ENCODE measurements at regions of chr9 and their contacts with region 1.

Region 1: GRCh38 chr9:132026932-132027585 is 52.6 kb downstream of the MED27 start:
- DNase-seq: peak; percentile 91
- H3K4me3 ChIP-seq: peak overlapping the region in 1 of 3 experiments; percentile 6
- H3K27ac ChIP-seq: peak overlapping the region; percentile 61
- H3K4me1 ChIP-seq: peaks cover 49% of the 10 kb centered on the region
- H3K27me3 ChIP-seq: no peaks in the 10 kb centered on the region
- CTCF ChIP-seq: no peak

Region 2: DNA sequence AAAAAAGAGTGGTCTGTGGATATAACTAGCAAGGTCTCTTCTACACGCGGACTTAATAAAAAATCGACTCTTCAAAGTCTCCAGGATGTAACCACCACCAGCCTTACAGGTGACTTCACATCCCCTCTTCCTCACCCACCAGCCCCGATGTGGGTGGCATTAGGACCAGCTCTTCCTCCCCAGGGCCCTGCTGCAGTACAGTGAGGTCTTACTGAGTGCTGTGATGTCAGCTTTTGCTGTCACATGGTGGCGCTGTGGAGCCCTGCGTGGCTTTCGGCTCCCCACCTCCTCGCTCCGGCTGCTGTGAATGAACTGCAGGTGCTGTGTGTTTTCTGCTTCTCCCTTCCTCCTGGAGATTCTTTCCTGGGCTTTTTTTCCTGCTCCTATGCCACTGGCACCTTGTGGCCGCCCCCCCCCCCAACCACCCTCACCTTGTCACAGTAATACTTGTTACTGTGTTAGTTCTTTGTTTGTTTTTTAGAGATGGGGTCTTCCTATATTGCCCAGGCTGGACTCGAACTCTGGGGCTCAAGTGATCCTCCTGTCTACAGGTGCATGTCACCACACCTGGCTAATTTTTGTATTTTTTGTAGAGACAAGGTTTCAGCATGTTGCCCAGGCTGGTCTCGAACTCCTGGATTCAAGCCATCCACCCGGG is 271.4 kb before region 1 on chr9:
- CTCF ChIA-PET with region 1: interaction called, 14 read pairs
- dilution Hi-C with region 1: no loop called
- in situ Hi-C with region 1: no loop called
- intact Hi-C with region 1: no loop called
- DNase-seq: peak; percentile 65
- H3K4me3 ChIP-seq: no peak overlapping the region
- H3K27ac ChIP-seq: no peak overlapping the region
- H3K4me1 ChIP-seq: no peaks in the 10 kb centered on the region
- H3K27me3 ChIP-seq: no peaks in the 10 kb centered on the region
- CTCF ChIP-seq: peak; percentile 91 to 95

Region 3: GRCh38 chr9:131910572-131910971 is 116.5 kb before region 1 on chr9:
- CTCF ChIA-PET with region 1: no interaction called
- dilution Hi-C with region 1: no loop called
- in situ Hi-C with region 1: no loop called
- intact Hi-C with region 1: no loop called
- DNase-seq: no peak
- H3K4me3 ChIP-seq: no peak overlapping the region
- H3K27ac ChIP-seq: no peak overlapping the region
- H3K4me1 ChIP-seq: no peaks in the 10 kb centered on the region
- H3K27me3 ChIP-seq: no peaks in the 10 kb centered on the region
- CTCF ChIP-seq: no peak

Region 4: DNA sequence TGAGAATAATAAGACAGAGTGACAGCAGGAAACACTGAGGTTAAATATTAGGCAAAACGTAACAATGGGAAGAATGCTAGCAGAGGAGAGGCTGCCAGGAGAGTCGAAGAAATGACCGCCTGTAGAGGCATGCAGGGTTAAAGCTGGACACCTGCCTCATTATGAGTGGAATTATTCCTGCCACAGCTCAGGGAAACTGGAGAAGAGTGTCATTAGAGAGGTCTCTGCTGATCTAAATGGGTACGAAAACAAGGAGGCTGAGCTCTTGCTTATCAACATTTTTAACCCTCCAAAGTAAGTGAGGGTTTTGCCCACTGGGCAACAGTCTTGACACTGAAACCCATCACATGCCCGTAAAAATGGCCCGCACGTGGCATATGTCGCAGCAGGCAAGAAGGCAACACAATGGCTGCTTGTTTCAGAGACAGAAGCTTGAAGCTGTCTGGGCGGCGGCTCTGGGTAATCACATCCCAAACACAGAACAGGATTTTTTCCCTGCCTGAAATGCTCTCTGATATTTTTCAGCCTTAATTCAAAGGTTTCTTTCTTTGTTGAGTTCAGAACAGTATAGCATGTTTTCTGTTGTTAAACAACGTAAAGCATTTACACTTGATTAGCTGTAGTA is 66.1 kb before region 1 on chr9:
- CTCF ChIA-PET with region 1: no interaction called
- dilution Hi-C with region 1: no loop called
- in situ Hi-C with region 1: no loop called
- intact Hi-C with region 1: no loop called
- DNase-seq: peak; percentile 31
- H3K4me3 ChIP-seq: no peak overlapping the region
- H3K27ac ChIP-seq: no peak overlapping the region
- H3K4me1 ChIP-seq: peaks cover 18% of the 10 kb centered on the region
- H3K27me3 ChIP-seq: no peaks in the 10 kb centered on the region
- CTCF ChIP-seq: no peak

Region 5: GRCh38 chr9:131999692-132000551 is 27.1 kb before region 1 on chr9:
- CTCF ChIA-PET with region 1: no interaction called
- dilution Hi-C with region 1: no loop called
- in situ Hi-C with region 1: no loop called
- intact Hi-C with region 1: loop called (anchors 2 kb)
- DNase-seq: peak; percentile 88
- H3K4me3 ChIP-seq: no peak overlapping the region
- H3K27ac ChIP-seq: peak overlapping the region; percentile 83
- H3K4me1 ChIP-seq: peaks cover 35% of the 10 kb centered on the region
- H3K27me3 ChIP-seq: no peaks in the 10 kb centered on the region
- CTCF ChIP-seq: peak; percentile 8 to 22

Region 6: DNA sequence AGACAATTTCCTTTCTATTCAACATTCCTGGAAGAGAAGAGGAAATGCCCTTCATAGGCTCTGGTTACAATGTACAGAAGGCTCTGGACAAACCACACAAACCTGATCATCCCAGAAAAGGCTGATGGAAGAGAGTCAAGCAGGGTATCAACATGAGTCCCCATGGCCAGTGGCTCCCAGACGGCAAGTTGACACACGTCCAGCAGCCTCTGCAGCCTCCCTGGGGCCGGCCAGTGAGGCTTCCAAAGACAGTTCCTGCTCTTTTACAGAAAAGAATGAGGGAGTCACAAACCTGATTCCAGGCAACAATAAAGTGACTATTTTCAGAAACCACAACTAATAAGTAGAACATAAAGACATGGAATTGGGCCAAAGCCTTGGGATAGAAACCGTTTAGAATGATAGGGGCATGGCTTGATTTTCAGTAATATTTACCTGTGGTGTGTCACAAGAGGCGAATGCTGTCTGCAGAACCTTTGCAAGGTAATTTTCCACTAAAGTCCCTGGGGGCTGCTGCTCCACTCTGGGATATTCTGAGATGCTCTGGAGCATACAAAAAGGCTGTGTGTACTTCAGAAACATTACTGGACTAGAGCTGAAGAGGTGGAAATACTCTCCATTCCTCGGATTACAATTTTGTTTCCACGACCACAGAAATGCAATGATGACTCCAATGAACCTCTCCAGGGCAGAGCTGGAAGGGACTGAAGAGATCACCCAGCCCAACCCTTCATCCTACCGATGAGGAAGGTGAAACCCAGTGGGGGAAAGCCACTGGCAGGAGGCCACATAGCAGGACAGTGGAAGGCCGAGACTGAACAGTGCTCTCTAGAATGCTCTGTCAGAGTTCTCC is 42.2 kb after region 1 on chr9:
- CTCF ChIA-PET with region 1: no interaction called
- dilution Hi-C with region 1: no loop called
- in situ Hi-C with region 1: no loop called
- intact Hi-C with region 1: loop called (anchors 5 kb)
- DNase-seq: peak; percentile 82
- H3K4me3 ChIP-seq: peak overlapping the region in 1 of 3 experiments; percentile 2
- H3K27ac ChIP-seq: peak overlapping the region; percentile 80
- H3K4me1 ChIP-seq: peaks cover 35% of the 10 kb centered on the region
- H3K27me3 ChIP-seq: no peaks in the 10 kb centered on the region
- CTCF ChIP-seq: no peak